HEK293T (cell line): ENCODE measurements at regions of chr17 and their contacts with region 1.

Region 1: DNA sequence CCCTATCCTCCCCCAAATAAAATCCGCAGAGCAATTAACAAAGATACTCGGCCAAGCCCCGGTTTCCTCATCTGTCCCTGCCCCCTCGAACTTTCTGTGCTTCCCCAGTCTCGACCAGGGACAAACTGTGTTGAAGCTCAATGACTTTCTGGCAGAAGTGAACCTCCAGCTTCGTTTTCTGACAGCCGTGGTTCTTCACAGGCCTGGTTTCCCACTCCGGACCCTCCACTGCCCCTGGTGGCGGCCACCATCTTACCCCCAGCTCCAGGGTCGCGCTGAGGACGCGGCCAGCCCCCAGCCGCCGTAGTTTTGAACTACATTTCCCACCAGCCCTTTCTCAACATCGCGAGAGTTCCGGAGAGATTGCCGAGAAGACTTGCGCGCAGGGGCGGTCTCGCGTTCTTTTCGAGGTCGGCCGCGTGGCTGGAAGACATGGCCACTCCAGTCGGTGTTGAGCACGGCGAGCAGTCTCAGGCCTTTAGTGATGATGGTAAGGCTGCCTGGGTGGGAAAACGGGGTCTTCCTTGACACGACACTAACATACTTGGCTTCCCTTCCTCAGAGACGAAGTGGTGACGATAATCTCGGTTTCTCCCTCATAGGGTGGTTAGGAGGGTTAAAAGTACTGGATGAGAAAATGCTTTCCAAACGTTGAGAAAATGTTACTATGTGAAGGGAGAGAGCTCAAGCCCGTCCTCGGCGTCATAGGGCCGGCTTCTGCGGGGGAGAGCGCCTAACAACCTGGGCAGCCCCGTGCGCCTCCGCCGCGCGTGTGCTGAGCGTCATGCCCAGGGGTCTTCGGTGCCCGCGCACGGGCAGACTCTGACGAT is 17.7 kb downstream of the PRCD start:
- DNase-seq: peak; percentile 95

Region 2: GRCh38 chr17:76523084-76524037 is 34.2 kb before region 1 on chr17:
- CTCF ChIA-PET with region 1: interaction called, 10 read pairs
- POLR2A ChIA-PET with region 1: interaction called, 19 read pairs
- DNase-seq: peak; percentile 92

Region 3: GRCh38 chr17:76567634-76568432 is 10.2 kb after region 1 on chr17:
- CTCF ChIA-PET with region 1: interaction called, 11 read pairs
- POLR2A ChIA-PET with region 1: interaction called, 22 read pairs
- DNase-seq: no peak

Region 4: GRCh38 chr17:76597728-76598474 is 40.3 kb after region 1 on chr17:
- CTCF ChIA-PET with region 1: no interaction called
- POLR2A ChIA-PET with region 1: interaction called, 16 read pairs
- DNase-seq: no peak

Region 5: DNA sequence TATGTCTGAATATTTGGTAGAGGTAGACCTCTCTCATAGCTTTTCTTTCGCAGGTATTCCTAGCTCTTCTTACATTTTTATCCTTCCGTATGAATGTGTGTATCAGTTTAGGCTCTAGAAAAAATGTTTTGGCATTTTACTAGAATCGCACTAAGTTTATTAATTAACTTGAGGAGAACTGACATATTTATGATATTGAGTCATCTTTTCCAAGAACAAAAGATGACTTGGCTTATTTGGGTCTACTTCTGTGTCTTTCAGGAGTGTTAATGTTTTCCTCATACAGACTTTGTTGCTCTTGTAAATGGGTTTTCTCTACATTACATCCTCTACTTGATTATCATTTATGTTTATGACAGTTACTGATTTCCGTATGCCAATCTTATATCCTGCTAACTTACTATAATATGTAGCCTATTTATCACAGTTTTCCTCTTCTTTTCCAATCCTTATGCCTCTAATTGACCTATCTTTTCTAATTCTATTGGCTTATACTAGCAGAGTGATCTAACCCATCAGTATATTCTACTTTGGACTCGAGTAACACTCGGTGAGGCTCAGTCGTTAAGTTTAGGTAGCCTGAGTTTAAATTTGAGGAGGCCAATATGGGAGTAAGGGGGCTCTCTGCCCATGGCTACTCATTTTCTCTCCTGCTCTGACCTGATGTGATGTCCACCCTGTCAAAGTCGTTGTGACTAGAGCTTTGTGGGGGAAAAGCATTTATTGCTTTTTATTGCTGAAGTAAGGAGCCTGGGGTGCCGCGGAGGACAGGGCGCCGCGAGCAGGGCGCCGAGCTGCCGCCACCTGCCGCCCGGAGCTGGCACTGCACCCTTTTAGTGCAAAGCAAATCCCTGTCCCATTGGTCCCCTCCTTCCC is 65.9 kb after region 1 on chr17:
- CTCF ChIA-PET with region 1: interaction called, 15 read pairs
- POLR2A ChIA-PET with region 1: interaction called, 36 read pairs
- DNase-seq: peak; percentile 86

Region 6: DNA sequence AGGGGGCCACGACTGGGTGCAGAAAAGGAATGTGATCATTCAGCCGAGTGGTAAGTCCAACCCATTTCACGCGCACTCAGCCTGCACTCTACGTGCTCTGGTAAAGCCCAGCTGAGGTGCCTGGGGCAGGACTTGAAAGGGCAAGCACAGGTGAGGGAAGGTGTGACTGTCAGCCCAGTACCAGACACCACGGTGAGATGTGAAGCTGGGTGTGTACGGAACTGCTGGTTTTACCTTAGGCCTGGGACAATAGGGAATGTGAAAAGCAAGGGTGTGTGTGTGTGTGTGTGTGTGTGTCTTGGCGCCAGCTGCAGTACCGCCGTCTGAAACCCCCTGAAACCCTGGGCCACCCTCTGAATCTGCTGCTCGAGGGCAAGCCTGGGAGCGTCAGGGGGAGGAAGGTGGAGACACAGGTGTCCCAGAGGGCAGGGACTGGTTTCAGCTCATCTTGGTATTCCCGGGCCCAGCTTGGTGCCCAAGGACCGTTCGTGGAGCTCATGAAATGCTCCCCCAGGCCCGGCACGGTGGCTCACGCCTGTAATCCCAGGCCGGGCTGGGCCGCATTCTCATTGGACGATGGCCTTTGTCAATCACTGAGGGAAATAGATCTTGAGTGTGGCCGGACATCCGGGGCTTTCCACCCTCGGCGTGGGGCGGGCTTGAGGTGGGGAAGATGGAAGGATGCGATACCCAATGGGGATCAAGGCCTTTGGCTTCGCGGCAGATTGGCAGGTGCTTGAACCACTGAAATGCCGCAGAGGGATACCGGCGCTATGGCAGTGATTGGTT is 113.7 kb after region 1 on chr17:
- CTCF ChIA-PET with region 1: interaction called, 5 read pairs
- POLR2A ChIA-PET with region 1: interaction called, 34 read pairs
- DNase-seq: peak; percentile 99

Region 7: GRCh38 chr17:76714822-76715495 is 157.4 kb after region 1 on chr17:
- CTCF ChIA-PET with region 1: no interaction called
- POLR2A ChIA-PET with region 1: interaction called, 12 read pairs
- DNase-seq: no peak